CD8-positive, alpha-beta T cell (primary cell): ENCODE measurements at regions of chr16 and their contacts with region 1.

Region 1: DNA sequence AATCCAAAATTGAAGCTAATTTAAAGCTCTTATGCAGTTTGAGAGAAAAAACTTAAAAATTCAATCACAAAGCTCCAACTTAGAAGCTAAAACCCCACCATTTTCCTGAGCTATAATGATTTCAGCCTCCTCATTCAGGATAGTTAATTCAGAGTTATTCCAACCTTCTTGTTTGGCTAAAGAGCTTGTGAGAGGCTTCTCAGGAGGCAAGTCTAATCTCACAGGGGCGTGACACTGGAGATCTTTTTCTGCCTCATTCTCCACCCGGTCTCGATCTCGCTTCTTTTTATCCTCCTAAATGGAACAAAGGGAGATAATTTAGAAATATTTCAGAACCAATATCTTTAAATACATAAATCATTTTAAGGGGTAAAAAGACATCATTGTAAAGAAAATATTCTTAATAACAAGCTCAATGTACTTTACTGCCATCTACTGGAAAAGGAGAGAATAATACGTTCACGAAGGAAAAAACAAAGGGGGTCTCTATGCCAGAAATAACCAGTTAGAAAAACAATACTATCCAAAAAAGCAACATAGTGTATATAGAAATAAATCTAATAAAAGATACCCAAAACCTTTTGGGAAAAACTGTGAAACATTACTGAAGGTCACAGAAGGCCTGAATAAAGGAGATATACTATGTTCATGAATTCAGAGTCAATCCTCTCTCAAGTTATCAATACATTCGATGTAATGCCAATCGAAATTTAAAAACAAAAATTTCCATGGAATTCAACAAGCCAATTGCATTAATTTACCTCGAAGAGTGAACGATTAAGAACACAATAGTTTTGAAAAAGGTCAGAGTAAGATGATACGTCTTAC is 13.9 kb downstream of the BRD7 start:
- DNase-seq: peak in 2 of 9 experiments; percentile 40 to 56
- ATAC-seq: peak; percentile 47
- H3K4me3 ChIP-seq: no peak overlapping the region
- H3K4me3 Mint-ChIP-seq: no peak overlapping the region
- H3K27ac ChIP-seq: no peak overlapping the region
- H3K27ac Mint-ChIP-seq: peak overlapping the region; percentile 60
- H3K4me1 ChIP-seq: no peaks in the 10 kb centered on the region
- H3K4me1 Mint-ChIP-seq: peaks cover 38% of the 10 kb centered on the region
- H3K27me3 ChIP-seq: no peaks in the 10 kb centered on the region
- H3K27me3 Mint-ChIP-seq: no peaks in the 10 kb centered on the region
- CTCF ChIP-seq: peak; percentile 94

Region 2: DNA sequence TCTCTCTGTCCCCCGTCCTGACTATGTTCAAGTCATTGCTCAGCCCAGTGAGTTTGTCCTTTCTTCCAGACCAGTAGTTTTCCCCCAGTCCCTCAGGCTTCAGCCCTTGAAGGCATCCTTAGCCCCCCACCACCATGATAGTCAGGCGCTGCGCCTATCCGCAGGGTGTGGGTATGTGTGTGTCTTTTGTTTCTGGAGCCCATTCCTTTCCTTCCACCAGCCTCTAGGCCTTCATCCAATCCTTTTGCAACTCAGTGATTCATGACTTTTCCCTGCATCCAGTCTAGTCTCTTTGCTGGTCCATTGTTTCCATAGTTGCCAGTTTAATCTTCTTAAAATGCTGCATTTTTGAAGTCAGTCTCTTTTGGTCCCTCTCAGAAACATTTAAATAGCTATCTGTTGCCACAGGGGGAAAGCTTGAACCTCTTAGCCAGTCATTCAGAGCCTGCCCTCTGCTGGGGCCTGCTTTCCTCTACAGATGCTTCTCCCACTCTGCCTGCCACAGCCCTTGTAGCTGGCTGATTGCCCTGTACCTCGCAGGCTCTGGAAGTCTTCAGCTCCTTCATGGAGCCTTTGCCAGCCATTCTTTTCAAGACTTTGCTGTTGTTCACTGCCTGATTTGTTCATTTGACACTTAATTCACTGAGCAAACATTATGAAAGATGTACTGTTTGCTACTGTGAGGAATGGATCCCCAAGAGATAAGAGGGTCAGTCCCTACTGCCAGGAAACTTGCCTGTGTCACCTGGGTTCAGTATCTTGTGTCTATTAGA is 144.4 kb before region 1 on chr16:
- CTCF ChIA-PET with region 1: interaction called, 47 read pairs
- POLR2A ChIA-PET with region 1: no interaction called
- intact Hi-C with region 1: loop called (anchors 1 kb)
- DNase-seq: peak; percentile 34 to 76 (median 60)
- ATAC-seq: peak; percentile 90
- H3K4me3 ChIP-seq: no peak overlapping the region
- H3K4me3 Mint-ChIP-seq: no peak overlapping the region
- H3K27ac ChIP-seq: no peak overlapping the region
- H3K27ac Mint-ChIP-seq: peak overlapping the region; percentile 72
- H3K4me1 ChIP-seq: peaks cover 3% of the 10 kb centered on the region
- H3K4me1 Mint-ChIP-seq: peaks cover 39% of the 10 kb centered on the region
- H3K27me3 ChIP-seq: no peaks in the 10 kb centered on the region
- H3K27me3 Mint-ChIP-seq: no peaks in the 10 kb centered on the region
- CTCF ChIP-seq: peak; percentile 61

Region 3: DNA sequence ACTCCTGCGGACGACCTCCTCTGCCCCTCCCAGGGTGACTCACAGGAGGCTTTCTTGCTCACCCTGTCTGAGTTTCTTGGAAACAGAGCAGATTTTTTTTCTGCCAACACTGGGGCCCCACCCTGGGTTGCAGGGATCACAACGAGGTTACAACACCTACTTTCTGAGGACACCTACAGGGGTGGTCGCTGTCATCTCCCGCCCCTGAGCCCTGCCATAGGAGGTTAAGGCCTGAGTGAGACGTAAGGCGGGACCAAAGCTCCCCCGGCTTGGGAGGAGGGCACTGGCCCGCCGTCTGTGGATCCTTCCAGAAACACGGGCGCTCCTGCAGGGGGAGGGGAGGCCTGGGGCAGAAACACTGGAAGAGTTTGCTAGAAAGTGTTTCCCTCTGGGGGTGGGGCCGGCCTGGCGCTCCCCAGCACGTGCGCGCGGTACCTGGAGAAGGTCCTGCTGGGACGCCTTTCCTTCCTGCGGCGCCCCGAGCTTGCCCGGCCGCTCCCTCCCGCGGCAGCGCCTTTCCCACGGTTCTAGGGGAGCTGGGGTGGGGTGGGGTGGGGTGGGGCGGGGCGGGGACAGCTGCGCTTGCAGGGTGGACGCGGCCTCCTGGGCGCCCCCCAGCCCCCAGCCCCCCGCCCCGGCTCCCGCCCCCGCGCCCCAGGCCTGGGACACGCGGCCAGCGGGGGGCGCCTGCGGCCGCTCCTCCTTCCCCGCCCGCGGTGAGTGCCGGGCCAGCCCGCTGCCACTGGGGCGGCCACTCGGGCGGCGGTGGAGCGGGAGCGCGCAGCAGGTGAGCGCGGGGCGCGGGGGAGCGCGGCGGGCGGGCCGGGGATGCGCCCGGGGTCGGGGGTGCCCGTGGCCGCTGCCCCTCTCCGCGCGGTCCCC is 109.2 kb before region 1 on chr16:
- CTCF ChIA-PET with region 1: interaction called, 11 read pairs
- POLR2A ChIA-PET with region 1: no interaction called
- intact Hi-C with region 1: loop called in 1 of 2 experiments (anchors 1 kb)
- DNase-seq: peak in 7 of 9 experiments; percentile 42 to 69 (median 56)
- ATAC-seq: peak; percentile 69
- H3K4me3 ChIP-seq: peak overlapping the region; percentile 50 to 55
- H3K4me3 Mint-ChIP-seq: peak overlapping the region; percentile 77
- H3K27ac ChIP-seq: no peak overlapping the region
- H3K27ac Mint-ChIP-seq: no peak overlapping the region
- H3K4me1 ChIP-seq: peaks cover 7% of the 10 kb centered on the region
- H3K4me1 Mint-ChIP-seq: peaks cover 7% of the 10 kb centered on the region
- H3K27me3 ChIP-seq: no peaks in the 10 kb centered on the region
- H3K27me3 Mint-ChIP-seq: no peaks in the 10 kb centered on the region
- CTCF ChIP-seq: no peak

Region 4: DNA sequence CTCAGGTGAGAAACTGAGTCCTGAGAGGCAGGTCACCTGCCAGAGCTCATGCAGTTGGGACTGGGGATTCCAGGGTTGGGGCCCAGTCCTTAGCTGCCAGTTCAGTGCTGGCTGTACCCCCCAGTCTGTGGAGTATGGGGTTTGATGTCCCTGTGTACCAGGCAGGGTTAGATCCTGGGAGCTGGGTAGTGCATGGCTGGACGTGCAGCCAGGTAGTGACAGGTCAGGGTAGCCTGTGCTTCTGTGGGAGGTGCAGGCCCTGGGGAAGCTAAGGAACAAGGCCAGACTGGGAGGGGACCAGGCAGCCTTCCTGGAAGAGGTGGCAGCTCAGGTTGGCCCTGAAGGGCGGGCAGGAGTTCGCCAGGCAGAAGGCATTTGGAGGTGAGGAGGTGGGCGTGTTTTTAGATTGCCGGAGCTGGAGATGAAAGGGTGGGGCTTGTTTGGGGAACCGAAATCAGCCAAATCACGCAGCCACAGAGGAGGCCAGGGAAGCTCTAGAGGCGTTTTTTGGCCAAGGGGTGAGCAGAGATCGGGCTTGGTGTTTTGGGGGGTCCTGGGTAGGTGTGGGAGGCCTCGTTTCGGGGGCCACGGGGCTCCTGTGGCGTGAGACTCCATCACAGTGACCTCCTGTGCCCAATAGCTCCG is 81.0 kb before region 1 on chr16:
- CTCF ChIA-PET with region 1: interaction called, 23 read pairs
- POLR2A ChIA-PET with region 1: interaction called, 4 read pairs
- intact Hi-C with region 1: no loop called
- DNase-seq: peak in 5 of 9 experiments; percentile 39 to 68 (median 50)
- ATAC-seq: peak; percentile 32
- H3K4me3 ChIP-seq: peak overlapping the region; percentile 46 to 80
- H3K4me3 Mint-ChIP-seq: peak overlapping the region; percentile 86
- H3K27ac ChIP-seq: peak overlapping the region; percentile 81 to 88
- H3K27ac Mint-ChIP-seq: peak overlapping the region; percentile 98
- H3K4me1 ChIP-seq: peaks cover 97% of the 10 kb centered on the region
- H3K4me1 Mint-ChIP-seq: peaks cover 97% of the 10 kb centered on the region
- H3K27me3 ChIP-seq: no peaks in the 10 kb centered on the region
- H3K27me3 Mint-ChIP-seq: no peaks in the 10 kb centered on the region
- CTCF ChIP-seq: no peak

Region 5: DNA sequence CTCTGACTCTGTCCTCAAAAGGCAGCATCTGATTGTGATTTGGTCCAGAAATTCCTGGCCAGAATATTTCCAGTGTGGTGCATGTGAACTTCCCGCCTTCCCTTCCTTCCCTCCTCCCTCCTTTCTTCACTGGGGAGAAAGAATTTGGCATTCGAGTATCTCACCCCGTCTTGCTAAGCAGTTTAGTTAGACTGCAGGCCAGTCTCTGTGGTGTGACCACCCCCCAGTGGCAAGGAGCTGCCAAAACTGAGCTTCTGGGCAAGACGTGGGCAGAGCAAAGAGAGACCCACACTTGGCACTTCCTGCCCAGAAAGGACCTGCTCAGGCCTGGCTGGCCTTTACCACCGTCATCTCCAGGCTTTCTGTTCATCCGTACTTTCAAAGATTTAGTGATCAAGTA is 289.9 kb after region 1 on chr16:
- CTCF ChIA-PET with region 1: interaction called, 11 read pairs
- POLR2A ChIA-PET with region 1: no interaction called
- intact Hi-C with region 1: no loop called
- DNase-seq: peak in 8 of 9 experiments; percentile 12 to 69 (median 52)
- ATAC-seq: peak; percentile 77
- H3K4me3 ChIP-seq: no peak overlapping the region
- H3K4me3 Mint-ChIP-seq: no peak overlapping the region
- H3K27ac ChIP-seq: no peak overlapping the region
- H3K27ac Mint-ChIP-seq: no peak overlapping the region
- H3K4me1 ChIP-seq: no peaks in the 10 kb centered on the region
- H3K4me1 Mint-ChIP-seq: peaks cover 5% of the 10 kb centered on the region
- H3K27me3 ChIP-seq: no peaks in the 10 kb centered on the region
- H3K27me3 Mint-ChIP-seq: peaks cover 2% of the 10 kb centered on the region
- CTCF ChIP-seq: peak; percentile 46